ENCODE measurements at regions of chr14 and their contacts with region 1.

Region 1: GRCh38 chr14:31357279-31357678 is 63.1 kb downstream of the HEATR5A start:
- DNase-seq: no peak
- ATAC-seq: no peak

Region 2: DNA sequence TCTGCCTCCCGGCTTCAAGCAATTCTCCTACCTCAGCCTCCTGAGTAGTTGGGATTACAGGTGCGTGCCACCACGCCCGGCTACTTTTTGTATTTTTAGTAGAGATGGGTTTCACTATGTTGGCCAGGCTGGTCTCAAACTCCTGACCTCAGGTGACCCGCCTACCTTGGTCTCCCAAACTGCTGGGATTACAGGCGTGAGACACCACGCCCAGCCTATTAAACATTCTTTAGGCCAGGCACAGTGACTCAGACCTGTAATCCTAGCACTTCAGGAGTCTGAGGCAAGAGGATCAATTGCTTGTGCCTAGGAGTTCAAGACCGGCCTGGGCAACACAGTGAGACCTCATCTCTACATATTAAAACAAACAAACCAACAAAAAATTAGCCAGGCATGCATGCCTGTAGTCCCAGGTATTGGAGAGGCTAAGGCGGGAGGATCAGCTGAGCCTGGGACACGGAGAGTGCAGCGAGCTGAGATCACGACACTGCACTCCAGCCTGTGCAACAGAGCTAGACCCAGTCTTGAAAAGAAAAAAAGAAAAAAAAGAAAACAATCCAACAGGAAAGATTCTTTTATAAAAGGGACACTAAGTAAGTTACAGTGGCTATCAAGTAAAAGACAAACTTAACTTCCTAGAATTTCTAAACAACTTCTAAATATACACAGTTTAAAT is 219.9 kb before region 1 on chr14:
- intact Hi-C with region 1: loop called in 1 of 2 experiments (anchors 10 kb)
- DNase-seq: no peak
- ATAC-seq: peak; percentile 86

Region 3: GRCh38 chr14:31411218-31411727 is 54.0 kb after region 1 on chr14:
- intact Hi-C with region 1: no loop called
- DNase-seq: no peak
- ATAC-seq: no peak